CD4-positive, alpha-beta T cell (primary cell): ENCODE measurements at regions of chr1 and their contacts with region 1.

Region 1: DNA sequence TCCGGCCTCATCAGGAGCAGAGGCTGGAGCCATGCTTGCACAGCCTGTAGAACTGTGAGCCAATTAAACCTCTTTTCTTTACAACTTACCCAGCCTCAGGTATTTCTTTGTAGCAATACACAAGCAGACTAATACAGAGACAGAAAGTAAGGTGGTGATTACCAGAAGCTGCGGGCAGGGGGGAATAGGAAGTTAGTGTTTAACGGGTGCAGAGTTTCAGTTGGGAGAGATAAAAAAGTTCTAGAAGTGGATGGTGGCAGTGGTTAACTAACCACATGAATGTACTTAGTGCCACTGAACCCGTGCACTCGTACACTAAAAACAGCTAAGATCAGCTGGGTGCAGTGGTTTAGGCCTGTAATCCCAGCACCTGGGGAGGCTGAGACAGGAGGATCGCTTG is 80.4 kb upstream of the TARDBP start:
- DNase-seq: peak in 4 of 14 experiments; percentile 15 to 53 (median 38)
- ATAC-seq: peak; percentile 70
- H3K4me3 ChIP-seq: no peak overlapping the region
- H3K4me3 Mint-ChIP-seq: no peak overlapping the region
- H3K27ac ChIP-seq: no peak overlapping the region
- H3K27ac Mint-ChIP-seq: no peak overlapping the region
- H3K4me1 ChIP-seq: peaks cover 7% of the 10 kb centered on the region
- H3K4me1 Mint-ChIP-seq: peaks cover 19% of the 10 kb centered on the region
- H3K27me3 ChIP-seq: no peaks in the 10 kb centered on the region
- H3K27me3 Mint-ChIP-seq: no peaks in the 10 kb centered on the region
- CTCF ChIP-seq: no peak

Region 2: GRCh38 chr1:10917513-10918454 is 14.3 kb before region 1 on chr1:
- CTCF ChIA-PET with region 1: no interaction called
- POLR2A ChIA-PET with region 1: interaction called, 5 read pairs
- intact Hi-C with region 1: loop called in 1 of 2 experiments (anchors 2 kb)
- DNase-seq: peak in 3 of 14 experiments; percentile 50 to 55 (median 52)
- ATAC-seq: peak; percentile 79
- H3K4me3 ChIP-seq: peak overlapping the region; percentile 4
- H3K4me3 Mint-ChIP-seq: peak overlapping the region; percentile 80
- H3K27ac ChIP-seq: no peak overlapping the region
- H3K27ac Mint-ChIP-seq: peak overlapping the region; percentile 38
- H3K4me1 ChIP-seq: peaks cover 33% of the 10 kb centered on the region
- H3K4me1 Mint-ChIP-seq: peaks cover 29% of the 10 kb centered on the region
- H3K27me3 ChIP-seq: no peaks in the 10 kb centered on the region
- H3K27me3 Mint-ChIP-seq: peaks cover 7% of the 10 kb centered on the region
- CTCF ChIP-seq: no peak